ENCODE measurements at regions of chr6 and their contacts with region 1.

Region 1: GRCh38 chr6:28838634-28839442 is 84.9 kb downstream of the TRIM27 start:
- DNase-seq: peak; percentile 80
- H3K4me3 ChIP-seq: peak overlapping the region; percentile 73 to 100 (median 78)
- H3K27ac ChIP-seq: no peak overlapping the region
- H3K4me1 ChIP-seq: no peaks in the 10 kb centered on the region
- H3K27me3 ChIP-seq: no peaks in the 10 kb centered on the region
- CTCF ChIP-seq: peak; percentile 37 to 81

Region 2: DNA sequence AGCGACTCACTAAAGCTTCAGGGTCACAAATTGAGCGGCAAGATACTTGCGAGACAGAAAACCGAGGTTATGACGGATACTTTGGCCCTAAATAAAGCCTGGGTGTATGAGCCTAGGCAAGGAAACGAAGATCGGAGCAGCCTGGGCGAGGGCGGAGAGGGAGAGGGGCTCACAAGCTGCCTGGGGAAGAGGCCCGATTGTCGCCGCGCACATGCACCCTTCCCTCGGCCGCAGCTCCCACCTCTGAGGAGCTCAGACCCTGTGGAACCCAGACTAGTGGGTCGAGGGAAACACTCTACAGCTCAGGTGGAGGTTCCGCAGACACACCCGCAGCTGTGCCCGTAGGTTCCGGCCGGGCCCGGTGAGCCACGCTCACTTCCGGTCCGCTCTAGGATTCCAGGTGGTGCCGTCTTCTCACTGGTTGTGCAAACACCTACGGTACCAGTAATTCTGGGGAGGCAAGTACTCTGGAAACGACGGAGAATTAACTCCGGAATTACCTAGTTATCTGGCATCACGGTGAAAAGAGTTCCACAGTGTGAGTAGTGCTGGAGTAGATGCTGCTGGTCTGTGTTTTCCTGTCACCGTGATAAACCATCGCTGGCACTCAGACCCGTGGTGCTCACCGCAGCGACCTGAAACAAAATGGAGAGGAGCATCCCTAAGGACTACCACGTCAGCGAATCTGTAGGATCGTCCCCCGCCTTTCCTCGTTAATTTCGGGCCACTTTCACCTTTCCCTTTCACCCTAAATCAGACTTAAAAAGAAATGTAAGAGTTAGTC is 251.7 kb before region 1 on chr6:
- CTCF ChIA-PET with region 1: no interaction called
- dilution Hi-C with region 1: no loop called
- in situ Hi-C with region 1: no loop called
- intact Hi-C with region 1: loop called (anchors 10 kb)
- DNase-seq: peak; percentile 83
- H3K4me3 ChIP-seq: peak overlapping the region; percentile 78 to 89 (median 84)
- H3K27ac ChIP-seq: peak overlapping the region; percentile 76
- H3K4me1 ChIP-seq: peaks cover 21% of the 10 kb centered on the region
- H3K27me3 ChIP-seq: no peaks in the 10 kb centered on the region
- CTCF ChIP-seq: no peak

Region 3: DNA sequence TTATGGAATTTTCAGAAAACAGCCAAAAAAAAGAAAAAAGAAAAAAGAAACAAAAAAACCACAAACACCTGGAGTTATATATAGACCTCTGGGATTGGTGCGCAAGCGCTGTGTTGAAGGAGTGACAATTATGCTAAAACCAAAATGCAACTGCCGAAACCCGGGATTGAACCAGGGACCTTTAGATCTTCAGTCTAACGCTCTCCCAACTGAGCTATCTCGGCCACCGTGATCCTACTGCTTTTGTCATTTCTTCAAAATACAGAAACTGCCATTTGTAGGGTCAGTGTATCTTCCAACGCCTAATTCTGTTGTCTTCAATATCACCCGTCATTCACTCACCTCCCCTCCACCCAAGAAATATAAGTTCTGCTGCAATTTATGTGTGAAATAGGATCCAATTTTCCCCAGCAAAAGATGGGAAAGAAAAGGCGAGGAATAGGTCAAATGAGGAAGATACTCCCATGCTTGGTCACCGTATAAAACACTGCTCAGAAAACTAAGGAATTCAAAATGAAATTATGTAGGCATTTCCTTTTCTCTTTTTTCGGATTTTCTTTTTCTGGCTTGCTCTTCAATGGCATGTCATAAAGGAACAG is 31.1 kb before region 1 on chr6:
- CTCF ChIA-PET with region 1: interaction called, 4 read pairs
- dilution Hi-C with region 1: no loop called
- in situ Hi-C with region 1: no loop called
- intact Hi-C with region 1: loop called (anchors 2 kb)
- DNase-seq: peak; percentile 70
- H3K4me3 ChIP-seq: peak overlapping the region; percentile 16 to 33 (median 32)
- H3K27ac ChIP-seq: no peak overlapping the region
- H3K4me1 ChIP-seq: peaks cover 8% of the 10 kb centered on the region
- H3K27me3 ChIP-seq: no peaks in the 10 kb centered on the region
- CTCF ChIP-seq: no peak

Region 4: GRCh38 chr6:28895134-28895812 is 56.4 kb after region 1 on chr6:
- CTCF ChIA-PET with region 1: interaction called, 3 read pairs
- dilution Hi-C with region 1: no loop called
- in situ Hi-C with region 1: no loop called
- intact Hi-C with region 1: loop called (anchors 1 kb)
- DNase-seq: peak; percentile 94
- H3K4me3 ChIP-seq: peak overlapping the region; percentile 64 to 80 (median 76)
- H3K27ac ChIP-seq: peak overlapping the region; percentile 98
- H3K4me1 ChIP-seq: no peaks in the 10 kb centered on the region
- H3K27me3 ChIP-seq: peaks cover 1% of the 10 kb centered on the region
- CTCF ChIP-seq: no peak

Region 5: GRCh38 chr6:28981833-28982475 is 143.1 kb after region 1 on chr6:
- CTCF ChIA-PET with region 1: no interaction called
- dilution Hi-C with region 1: no loop called
- in situ Hi-C with region 1: no loop called
- intact Hi-C with region 1: loop called (anchors 1 kb)
- DNase-seq: peak; percentile 91
- H3K4me3 ChIP-seq: peak overlapping the region; percentile 92 to 95 (median 95)
- H3K27ac ChIP-seq: peak overlapping the region; percentile 63
- H3K4me1 ChIP-seq: peaks cover 31% of the 10 kb centered on the region
- H3K27me3 ChIP-seq: no peaks in the 10 kb centered on the region
- CTCF ChIP-seq: no peak

Region 6: GRCh38 chr6:29071831-29072723 is 233.2 kb after region 1 on chr6:
- CTCF ChIA-PET with region 1: no interaction called
- dilution Hi-C with region 1: no loop called
- in situ Hi-C with region 1: no loop called
- intact Hi-C with region 1: no loop called
- DNase-seq: peak; percentile 42
- H3K4me3 ChIP-seq: no peak overlapping the region
- H3K27ac ChIP-seq: no peak overlapping the region
- H3K4me1 ChIP-seq: no peaks in the 10 kb centered on the region
- H3K27me3 ChIP-seq: no peaks in the 10 kb centered on the region
- CTCF ChIP-seq: peak; percentile 74 to 93

Region 7: DNA sequence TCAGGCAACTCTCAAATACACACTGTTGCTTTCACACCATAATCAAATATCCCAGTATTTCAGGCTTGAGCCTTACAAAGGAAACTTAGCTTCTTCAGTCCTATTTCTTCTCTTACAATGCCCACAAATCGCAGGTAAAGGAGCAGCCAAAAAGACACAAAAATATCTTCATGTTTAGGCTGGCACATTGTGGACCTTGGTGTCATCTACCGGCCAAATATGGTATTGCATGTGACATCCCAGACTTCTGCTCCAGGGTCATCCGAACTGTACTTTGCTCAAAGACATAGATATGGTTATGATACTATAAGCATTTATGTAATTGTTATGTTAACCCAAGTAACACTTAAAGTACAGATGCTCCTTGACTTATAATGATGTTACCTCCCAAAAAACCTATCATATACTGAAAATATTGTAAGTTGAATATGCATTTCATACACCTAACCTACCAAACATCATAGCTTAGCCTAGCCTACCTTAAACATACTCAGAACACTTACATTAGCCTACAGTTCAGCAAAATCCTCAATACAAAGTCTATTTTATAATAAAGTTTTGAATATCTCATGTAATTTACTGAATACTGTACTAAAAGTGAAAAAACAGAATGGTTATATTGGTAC is 750.7 kb after region 1 on chr6:
- CTCF ChIA-PET with region 1: no interaction called
- dilution Hi-C with region 1: no loop called
- in situ Hi-C with region 1: no loop called
- intact Hi-C with region 1: loop called (anchors 5 kb)
- DNase-seq: peak; percentile 37
- H3K4me3 ChIP-seq: no peak overlapping the region
- H3K27ac ChIP-seq: no peak overlapping the region
- H3K4me1 ChIP-seq: no peaks in the 10 kb centered on the region
- H3K27me3 ChIP-seq: no peaks in the 10 kb centered on the region
- CTCF ChIP-seq: peak; percentile 98 to 100